Activated naive CD4-positive, alpha-beta T cell treated with anti-CD3 and anti-CD28 coated beads, Interleukin-2, amount 10 ng/mL, durations not matched to agents 7 days and 5 days (primary cell): ENCODE measurements at regions of chr1 and their contacts with region 1.

Region 1: GRCh38 chr1:159197561-159198557 is 6.8 kb upstream of the ACKR1 start:
- DNase-seq: peak; percentile 62
- H3K4me3 Mint-ChIP-seq: no peak overlapping the region
- H3K27ac Mint-ChIP-seq: no peak overlapping the region
- H3K4me1 Mint-ChIP-seq: peaks cover 2% of the 10 kb centered on the region
- H3K27me3 Mint-ChIP-seq: peaks cover 53% of the 10 kb centered on the region

Region 2: DNA sequence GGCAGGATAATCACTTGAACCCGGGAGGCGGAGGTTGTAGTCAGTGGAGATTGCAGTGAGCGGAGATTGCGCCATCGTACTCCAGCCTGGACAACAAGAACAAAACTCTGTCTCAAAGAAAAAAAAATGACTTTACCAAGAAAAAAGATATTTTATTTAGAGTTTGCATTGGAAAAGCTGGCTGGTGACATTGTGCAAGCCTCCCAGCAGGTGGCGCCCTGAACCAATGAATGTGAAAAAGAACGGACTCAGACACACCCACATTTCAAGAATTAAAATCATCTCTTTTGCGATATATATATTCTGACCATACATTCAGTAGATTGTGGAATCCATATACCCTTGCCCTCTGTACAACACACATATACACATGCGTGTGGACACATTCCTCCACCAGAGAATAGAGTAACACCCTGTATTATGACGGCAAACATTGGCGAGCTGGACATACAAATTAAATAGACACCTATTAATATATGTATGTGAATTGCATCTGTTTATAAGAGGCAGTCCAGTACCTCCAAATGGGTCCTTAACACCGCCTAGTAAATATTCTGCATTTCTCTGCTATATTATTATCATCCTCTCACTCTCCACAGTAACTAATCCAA is 65.5 kb before region 1 on chr1:
- CTCF ChIA-PET with region 1: interaction called, 14 read pairs
- DNase-seq: peak; percentile 74
- H3K4me3 Mint-ChIP-seq: no peak overlapping the region
- H3K27ac Mint-ChIP-seq: no peak overlapping the region
- H3K4me1 Mint-ChIP-seq: no peaks in the 10 kb centered on the region
- H3K27me3 Mint-ChIP-seq: peaks cover 4% of the 10 kb centered on the region

Region 3: GRCh38 chr1:159161001-159161718 is 36.7 kb before region 1 on chr1:
- CTCF ChIA-PET with region 1: interaction called, 13 read pairs
- DNase-seq: peak; percentile 69
- H3K4me3 Mint-ChIP-seq: no peak overlapping the region
- H3K27ac Mint-ChIP-seq: no peak overlapping the region
- H3K4me1 Mint-ChIP-seq: no peaks in the 10 kb centered on the region
- H3K27me3 Mint-ChIP-seq: peaks cover 8% of the 10 kb centered on the region

Region 4: DNA sequence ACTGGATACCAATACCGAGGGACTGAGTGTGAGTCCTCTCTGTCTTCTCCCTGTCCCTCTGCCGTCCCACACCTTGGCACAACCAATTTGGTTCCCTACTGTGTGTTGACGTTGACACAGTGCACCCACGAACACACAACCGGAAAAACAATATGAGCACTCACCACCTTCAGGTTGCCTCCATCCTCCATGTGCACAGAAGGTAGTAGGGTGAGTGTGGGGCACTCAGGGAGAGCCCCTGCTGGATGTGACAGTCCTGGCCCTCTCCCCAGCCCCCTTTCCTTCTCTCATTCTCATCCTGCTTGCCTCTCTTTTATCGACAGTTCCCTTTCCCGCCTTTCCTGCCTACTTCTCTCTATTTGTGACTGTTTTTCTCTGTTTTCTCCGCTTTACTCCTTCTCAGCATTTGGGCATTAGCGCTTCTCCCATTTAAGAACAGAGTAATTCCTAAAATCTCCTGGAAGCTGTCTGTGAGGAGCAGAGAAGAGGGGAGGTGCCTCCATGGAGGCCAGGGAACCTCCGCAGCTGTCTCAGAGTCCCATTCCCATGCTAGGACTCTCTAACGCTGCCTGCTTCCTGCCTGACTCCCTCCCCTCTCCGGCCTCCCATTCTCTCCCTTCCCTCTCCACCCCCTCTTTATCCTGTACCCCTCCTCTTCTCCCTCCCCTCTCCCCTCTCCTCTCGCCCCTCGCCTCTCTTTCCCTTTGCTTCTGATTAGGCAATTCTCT is 10.0 kb before region 1 on chr1:
- CTCF ChIA-PET with region 1: no interaction called
- DNase-seq: no peak
- H3K4me3 Mint-ChIP-seq: no peak overlapping the region
- H3K27ac Mint-ChIP-seq: no peak overlapping the region
- H3K4me1 Mint-ChIP-seq: no peaks in the 10 kb centered on the region
- H3K27me3 Mint-ChIP-seq: peaks cover 55% of the 10 kb centered on the region

Region 5: GRCh38 chr1:159239551-159240220 is 41.8 kb after region 1 on chr1:
- CTCF ChIA-PET with region 1: no interaction called
- DNase-seq: no peak
- H3K4me3 Mint-ChIP-seq: no peak overlapping the region
- H3K27ac Mint-ChIP-seq: no peak overlapping the region
- H3K4me1 Mint-ChIP-seq: no peaks in the 10 kb centered on the region
- H3K27me3 Mint-ChIP-seq: no peaks in the 10 kb centered on the region

Region 6: GRCh38 chr1:159282118-159282517 is 84.3 kb after region 1 on chr1:
- CTCF ChIA-PET with region 1: no interaction called
- DNase-seq: no peak
- H3K4me3 Mint-ChIP-seq: no peak overlapping the region
- H3K27ac Mint-ChIP-seq: no peak overlapping the region
- H3K4me1 Mint-ChIP-seq: no peaks in the 10 kb centered on the region
- H3K27me3 Mint-ChIP-seq: no peaks in the 10 kb centered on the region

Region 7: DNA sequence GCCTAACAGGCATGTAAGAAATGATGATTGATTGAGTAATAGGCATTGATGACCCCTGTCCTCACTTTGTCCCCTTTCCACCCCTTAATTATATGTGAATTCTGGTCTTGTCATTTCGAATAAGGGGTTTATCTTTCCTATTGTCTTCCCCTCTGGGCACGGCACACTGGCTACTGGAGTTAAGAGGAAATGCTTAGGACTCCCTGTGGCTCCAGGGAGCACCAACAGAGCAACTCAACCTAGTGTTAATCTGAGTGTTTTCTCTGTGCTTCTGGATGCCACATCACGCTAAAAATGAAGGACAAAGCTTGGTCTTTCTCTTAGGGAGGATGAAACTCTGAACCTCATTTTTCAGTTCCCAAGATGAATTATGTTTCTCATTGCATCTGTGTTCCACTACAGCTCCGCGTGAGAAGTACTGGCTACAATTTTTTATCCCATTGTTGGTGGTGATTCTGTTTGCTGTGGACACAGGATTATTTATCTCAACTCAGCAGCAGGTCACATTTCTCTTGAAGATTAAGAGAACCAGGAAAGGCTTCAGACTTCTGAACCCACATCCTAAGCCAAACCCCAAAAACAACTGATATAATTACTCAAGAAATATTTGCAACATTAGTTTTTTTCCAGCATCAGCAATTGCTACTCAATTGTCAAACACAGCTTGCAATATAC is 109.6 kb after region 1 on chr1:
- CTCF ChIA-PET with region 1: no interaction called
- DNase-seq: no peak
- H3K4me3 Mint-ChIP-seq: no peak overlapping the region
- H3K27ac Mint-ChIP-seq: no peak overlapping the region
- H3K4me1 Mint-ChIP-seq: no peaks in the 10 kb centered on the region
- H3K27me3 Mint-ChIP-seq: peaks cover 3% of the 10 kb centered on the region